ENCODE measurements at regions of chr3 and their contacts with region 1.

Region 1: DNA sequence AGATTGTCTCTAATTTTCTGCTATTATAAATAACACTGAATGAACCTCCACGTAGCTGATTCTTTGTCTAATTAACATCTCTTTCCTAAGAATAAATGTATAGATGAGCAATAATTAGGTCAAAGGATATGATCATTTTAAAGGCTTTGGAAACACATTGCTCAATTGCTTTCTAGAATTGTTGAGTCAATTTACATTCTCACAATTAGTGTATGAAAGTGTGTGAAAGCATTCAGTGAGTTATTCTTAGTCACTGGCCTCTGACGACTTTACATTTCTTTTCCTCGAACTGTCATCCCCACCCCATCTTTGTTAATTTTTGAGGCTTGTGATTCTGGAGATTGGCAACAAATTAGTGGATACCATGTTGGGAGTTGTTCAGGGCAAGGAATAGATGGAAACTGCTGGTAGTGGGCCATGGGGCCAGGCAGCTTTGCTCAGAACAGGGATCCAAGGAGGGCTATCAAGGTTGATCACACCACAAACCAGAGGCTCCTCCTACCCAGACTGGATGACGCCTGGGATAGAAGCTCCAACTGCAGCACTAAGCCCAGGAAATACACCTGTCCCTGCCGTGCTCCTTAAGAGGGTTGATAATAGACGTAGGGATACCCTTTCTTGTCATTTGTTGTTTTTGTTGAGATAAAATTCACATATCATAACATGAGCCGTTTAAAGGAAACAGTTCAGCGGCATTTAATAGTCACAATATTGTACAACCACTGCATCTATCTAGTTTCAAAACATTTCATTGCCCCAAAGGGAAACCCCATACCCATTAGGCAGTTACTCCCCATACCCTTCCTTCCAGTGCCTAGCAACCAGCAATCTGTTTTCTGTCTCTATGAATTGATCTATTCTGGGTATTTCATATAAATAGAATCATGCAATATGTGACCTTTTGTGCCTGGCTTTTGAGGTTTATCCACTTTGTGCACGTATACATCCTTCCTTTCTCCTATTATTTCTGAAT is 27.9 kb downstream of the EIF1B start:
- DNase-seq: no peak
- H3K4me3 Mint-ChIP-seq: no peak overlapping the region
- H3K27ac Mint-ChIP-seq: peak overlapping the region; percentile 87
- H3K4me1 Mint-ChIP-seq: peaks cover 19% of the 10 kb centered on the region
- H3K27me3 Mint-ChIP-seq: peaks cover 2% of the 10 kb centered on the region

Region 2: GRCh38 chr3:40382617-40382979 is 45.2 kb after region 1 on chr3:
- intact Hi-C with region 1: loop called (anchors 5 kb)
- DNase-seq: no peak
- H3K4me3 Mint-ChIP-seq: no peak overlapping the region
- H3K27ac Mint-ChIP-seq: peak overlapping the region; percentile 6
- H3K4me1 Mint-ChIP-seq: peaks cover 19% of the 10 kb centered on the region
- H3K27me3 Mint-ChIP-seq: peaks cover 7% of the 10 kb centered on the region